H1 (cell line): ENCODE measurements at regions of chr5 and their contacts with region 1.

Region 1: GRCh38 chr5:64417390-64417789 is 88.4 kb upstream of the RGS7BP start:
- DNase-seq: peak in 1 of 2 experiments; percentile 50
- H3K4me3 ChIP-seq: no peak overlapping the region
- H3K27ac ChIP-seq: no peak overlapping the region
- H3K4me1 ChIP-seq: 0 out of 7 replicates have a peak, but pooled peaks cover 0 to 2% (median 0%) of the 10 kb centered on the region in 4 experiments
- H3K27me3 ChIP-seq: no peaks in the 10 kb centered on the region
- CTCF ChIP-seq: peak; percentile 32 to 54 (median 41)
- EP300 ChIP-seq: no peak
- POLR2A ChIP-seq: no peak
- RAD21 ChIP-seq: peak; percentile 43 to 47

Region 2: DNA sequence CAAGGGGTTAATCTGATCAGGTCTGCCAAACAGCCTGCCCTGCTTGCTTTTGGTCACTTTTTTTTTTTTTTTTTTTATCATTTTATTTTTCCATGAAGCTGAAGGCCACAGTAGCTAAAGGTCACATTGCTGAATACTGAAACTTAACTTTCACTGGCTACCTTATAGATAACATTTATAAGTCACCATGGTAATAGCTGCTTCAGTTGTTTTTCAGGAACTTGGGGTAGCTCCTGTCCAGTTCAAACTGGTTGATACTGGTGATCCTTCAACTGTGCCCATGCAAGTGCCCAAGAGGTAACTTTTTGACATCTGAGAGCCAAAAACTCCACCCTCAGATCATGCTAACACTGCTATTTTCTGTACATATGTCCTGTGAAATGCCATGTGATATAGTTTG is 20.1 kb after region 1 on chr5:
- CTCF ChIA-PET with region 1: no interaction called
- POLR2A ChIA-PET with region 1: no interaction called
- DNase-seq: no peak
- H3K4me3 ChIP-seq: no peak overlapping the region
- H3K27ac ChIP-seq: no peak overlapping the region
- H3K4me1 ChIP-seq: no peaks in the 10 kb centered on the region
- H3K27me3 ChIP-seq: no peaks in the 10 kb centered on the region
- CTCF ChIP-seq: no peak
- EP300 ChIP-seq: no peak
- POLR2A ChIP-seq: no peak
- RAD21 ChIP-seq: no peak

Region 3: DNA sequence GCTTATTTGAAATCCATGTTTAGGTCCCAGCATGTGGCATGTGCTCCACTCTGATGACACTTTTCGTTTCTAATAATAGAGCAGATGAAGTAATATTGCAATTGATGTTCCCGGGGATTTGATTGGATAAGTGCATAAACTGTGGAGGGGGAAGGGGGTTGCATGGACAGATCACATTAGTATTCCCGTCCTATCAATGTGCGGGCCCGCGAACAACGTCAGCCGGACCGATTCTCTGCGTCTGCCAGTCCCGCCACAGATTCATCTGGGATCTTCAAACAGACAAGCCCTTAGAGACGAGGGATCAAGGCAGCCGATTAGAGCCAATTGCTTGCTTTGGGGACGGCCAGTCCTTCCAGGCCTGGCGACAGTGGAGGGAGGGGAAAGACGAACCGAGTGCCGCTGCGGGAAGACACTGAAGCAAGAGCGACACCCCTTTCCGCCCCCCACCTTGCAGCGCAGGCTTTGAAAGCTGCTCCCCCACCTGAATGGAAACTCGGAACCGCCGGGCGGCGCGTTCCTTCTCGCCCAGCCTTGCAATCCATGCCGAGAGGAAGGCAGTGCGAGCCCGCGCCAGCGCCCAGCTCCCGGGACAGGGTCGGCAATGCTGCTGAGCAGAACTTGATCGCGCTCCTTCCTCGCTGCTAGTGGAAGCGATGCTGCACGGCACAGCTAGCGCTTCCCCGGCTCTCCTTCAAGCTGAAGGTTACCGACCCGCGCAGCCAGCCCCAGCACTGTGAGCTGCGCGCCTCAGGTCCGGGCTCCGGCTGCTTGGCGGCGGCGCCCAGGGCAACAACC is 88.6 kb after region 1 on chr5 and contains the start of gene RGS7BP:
- CTCF ChIA-PET with region 1: interaction called, 10 read pairs
- POLR2A ChIA-PET with region 1: no interaction called
- DNase-seq: peak; percentile 21 to 78
- H3K4me3 ChIP-seq: peak within 1 kb of the TSS; percentile 66 to 87 (median 78)
- H3K27ac ChIP-seq: no peak within 1 kb of the TSS
- H3K4me1 ChIP-seq: peaks cover 2 to 16% (median 7%) of the 10 kb centered on the region in 4 experiments; a peak in 3 of 7 replicates
- H3K27me3 ChIP-seq: peaks cover 4 to 39% (median 23%) of the 10 kb centered on the region in 4 experiments
- CTCF ChIP-seq: peak in 1 of 3 experiments; percentile 17; a peak in 1 of 4 replicates
- EP300 ChIP-seq: no peak
- POLR2A ChIP-seq: no peak; a peak in 2 of 3 replicates
- RAD21 ChIP-seq: no peak
- total RNA-seq, gene RGS7BP: 2.3 TPM in 2 replicates